Activated CD8-positive, alpha-beta T cell treated with anti-CD3 and anti-CD28 coated beads for 36 hours (primary cell): ENCODE measurements at regions of chr14 and their contacts with region 1.

Region 1: GRCh38 chr14:59964251-59965007 is 44.5 kb downstream of the LRRC9 start:
- DNase-seq: no peak
- ATAC-seq: peak; percentile 19
- H3K4me3 Mint-ChIP-seq: peak overlapping the region; percentile 75
- H3K27ac Mint-ChIP-seq: peak overlapping the region; percentile 96
- H3K4me1 Mint-ChIP-seq: peaks cover 26% of the 10 kb centered on the region
- H3K27me3 Mint-ChIP-seq: peaks cover 4% of the 10 kb centered on the region
- CTCF ChIP-seq: no peak

Region 2: GRCh38 chr14:59890676-59891075 is 73.8 kb before region 1 on chr14:
- CTCF ChIA-PET with region 1: no interaction called
- POLR2A ChIA-PET with region 1: no interaction called
- intact Hi-C with region 1: no loop called
- DNase-seq: no peak
- ATAC-seq: no peak
- H3K4me3 Mint-ChIP-seq: no peak overlapping the region
- H3K27ac Mint-ChIP-seq: no peak overlapping the region
- H3K4me1 Mint-ChIP-seq: no peaks in the 10 kb centered on the region
- H3K27me3 Mint-ChIP-seq: peaks cover 6% of the 10 kb centered on the region
- CTCF ChIP-seq: no peak

Region 3: GRCh38 chr14:59918824-59919569 is 45.4 kb before region 1 on chr14:
- CTCF ChIA-PET with region 1: interaction called, 14 read pairs
- POLR2A ChIA-PET with region 1: no interaction called
- intact Hi-C with region 1: no loop called
- DNase-seq: peak; percentile 63
- ATAC-seq: peak; percentile 60
- H3K4me3 Mint-ChIP-seq: peak overlapping the region; percentile 73
- H3K27ac Mint-ChIP-seq: peak overlapping the region; percentile 36
- H3K4me1 Mint-ChIP-seq: peaks cover 8% of the 10 kb centered on the region
- H3K27me3 Mint-ChIP-seq: peaks cover 27% of the 10 kb centered on the region
- CTCF ChIP-seq: peak; percentile 69

Region 4: DNA sequence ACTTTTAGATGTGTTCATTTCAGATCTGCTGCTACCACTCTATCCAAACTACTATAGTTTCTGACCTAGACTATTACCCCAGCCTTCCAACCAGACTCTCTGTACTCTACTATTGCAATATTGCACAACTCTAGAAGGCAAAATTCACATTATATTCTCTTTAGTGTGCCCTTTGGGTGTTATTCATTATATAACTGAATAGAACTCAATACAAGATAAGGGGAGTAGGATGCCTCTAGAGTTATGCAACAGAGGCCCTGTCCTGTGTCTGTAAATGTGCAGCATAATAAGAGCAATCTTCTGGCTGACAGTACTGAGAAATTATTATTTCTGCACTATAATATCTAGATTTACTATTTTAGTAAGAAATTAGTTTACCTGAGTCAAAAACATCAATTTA is 18.6 kb after region 1 on chr14:
- CTCF ChIA-PET with region 1: interaction called, 37 read pairs
- POLR2A ChIA-PET with region 1: no interaction called
- intact Hi-C with region 1: no loop called
- DNase-seq: no peak
- ATAC-seq: no peak
- H3K4me3 Mint-ChIP-seq: no peak overlapping the region
- H3K27ac Mint-ChIP-seq: no peak overlapping the region
- H3K4me1 Mint-ChIP-seq: no peaks in the 10 kb centered on the region
- H3K27me3 Mint-ChIP-seq: no peaks in the 10 kb centered on the region
- CTCF ChIP-seq: no peak

Region 5: DNA sequence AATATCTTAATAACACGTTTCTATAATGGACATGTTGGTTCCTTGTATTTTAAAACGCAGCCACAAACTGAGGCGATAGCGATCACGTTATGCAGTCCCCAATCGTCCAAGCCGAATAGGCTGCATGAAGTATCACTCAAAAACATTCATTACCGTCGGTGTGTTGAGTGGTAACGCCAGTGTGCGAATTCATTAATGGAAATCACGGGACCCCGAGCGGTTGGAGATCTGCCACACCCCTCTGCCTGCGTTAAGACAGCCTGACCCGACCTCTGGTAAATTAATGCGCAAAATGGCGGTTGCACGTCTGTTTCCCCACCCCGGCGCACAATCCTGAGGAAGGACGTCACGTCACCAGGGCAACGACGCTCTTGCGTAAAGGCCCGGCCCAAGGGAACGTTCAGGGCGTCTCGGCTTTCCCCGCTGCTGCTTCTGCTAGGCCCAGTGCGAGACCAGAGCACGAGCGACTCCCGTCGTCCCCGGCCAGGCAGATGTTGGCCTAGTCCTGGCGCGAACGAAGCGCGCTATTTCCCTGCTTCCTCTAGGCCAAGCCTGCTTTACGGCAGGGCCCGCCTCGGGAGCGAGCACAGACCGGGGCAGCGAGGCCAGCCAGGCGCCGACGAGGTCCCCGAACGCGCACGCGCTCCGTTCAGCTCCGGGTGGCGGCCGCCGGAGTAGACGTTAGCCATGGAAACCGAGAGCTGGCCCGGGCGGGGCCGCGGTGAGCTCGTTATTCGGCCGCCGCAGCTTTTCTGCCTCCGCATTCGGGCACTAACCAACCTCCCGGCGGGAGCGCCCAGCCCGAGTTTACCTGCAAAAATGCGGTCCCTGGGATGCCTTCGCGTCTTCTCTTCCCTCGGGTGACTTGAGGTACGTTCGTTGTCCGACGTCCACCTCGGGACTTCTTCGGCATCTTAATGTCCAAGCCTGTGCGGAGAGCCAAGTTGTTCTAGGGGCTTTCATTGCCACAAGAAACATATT is 127.4 kb after region 1 on chr14 and contains the start of gene PCNX4:
- CTCF ChIA-PET with region 1: interaction called, 17 read pairs
- POLR2A ChIA-PET with region 1: interaction called, 4 read pairs
- intact Hi-C with region 1: loop called (anchors 5 kb)
- DNase-seq: peak; percentile 97
- ATAC-seq: peak; percentile 93
- H3K4me3 Mint-ChIP-seq: peak within 1 kb of the TSS; percentile 100
- H3K27ac Mint-ChIP-seq: peak within 1 kb of the TSS; percentile 98
- H3K4me1 Mint-ChIP-seq: peaks cover 30% of the 10 kb centered on the region
- H3K27me3 Mint-ChIP-seq: no peaks in the 10 kb centered on the region
- CTCF ChIP-seq: no peak
- total RNA-seq, gene PCNX4: 28.2 to 30.0 TPM

Region 6: DNA sequence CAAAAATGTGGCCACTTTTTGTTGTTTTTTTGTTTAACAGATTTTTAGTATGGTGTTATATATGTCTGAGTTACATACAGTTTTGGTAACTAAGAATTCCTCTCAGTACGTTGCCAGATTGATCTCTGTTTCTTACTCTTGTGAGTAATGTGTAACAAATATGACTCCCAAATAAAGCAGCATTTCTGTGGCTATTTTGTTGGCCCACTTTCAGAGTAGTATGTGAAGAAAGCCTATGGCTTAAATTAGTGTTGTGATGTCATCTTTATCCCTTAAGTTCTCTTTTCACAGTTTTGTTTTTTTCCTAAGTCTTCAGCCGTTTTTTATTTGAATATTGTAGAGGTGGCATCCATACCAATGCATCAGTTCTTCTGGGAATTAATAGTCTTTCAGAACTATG is 138.0 kb after region 1 on chr14:
- CTCF ChIA-PET with region 1: no interaction called
- POLR2A ChIA-PET with region 1: no interaction called
- intact Hi-C with region 1: no loop called
- DNase-seq: no peak
- ATAC-seq: no peak
- H3K4me3 Mint-ChIP-seq: no peak overlapping the region
- H3K27ac Mint-ChIP-seq: no peak overlapping the region
- H3K4me1 Mint-ChIP-seq: peaks cover 40% of the 10 kb centered on the region
- H3K27me3 Mint-ChIP-seq: no peaks in the 10 kb centered on the region
- CTCF ChIP-seq: no peak

Region 7: GRCh38 chr14:60839657-60840056 is 875.2 kb after region 1 on chr14:
- CTCF ChIA-PET with region 1: no interaction called
- POLR2A ChIA-PET with region 1: no interaction called
- intact Hi-C with region 1: no loop called
- DNase-seq: no peak
- ATAC-seq: no peak
- H3K4me3 Mint-ChIP-seq: no peak overlapping the region
- H3K27ac Mint-ChIP-seq: no peak overlapping the region
- H3K4me1 Mint-ChIP-seq: no peaks in the 10 kb centered on the region
- H3K27me3 Mint-ChIP-seq: no peaks in the 10 kb centered on the region
- CTCF ChIP-seq: no peak